ENCODE measurements at regions of chr10 and their contacts with region 1.

Region 1: GRCh38 chr10:95864906-95865813 is 42.6 kb upstream of the CC2D2B start:
- DNase-seq: peak in 1 of 2 donors; percentile 31
- H3K4me3 ChIP-seq: no peak overlapping the region
- H3K27ac ChIP-seq: peak overlapping the region; percentile 27 to 47
- H3K4me1 ChIP-seq: peaks cover 0 to 9% (median 4%) of the 10 kb centered on the region in 4 donors
- H3K27me3 ChIP-seq: no peaks in the 10 kb centered on the region
- CTCF ChIP-seq: peak; percentile 64 to 68

Region 2: DNA sequence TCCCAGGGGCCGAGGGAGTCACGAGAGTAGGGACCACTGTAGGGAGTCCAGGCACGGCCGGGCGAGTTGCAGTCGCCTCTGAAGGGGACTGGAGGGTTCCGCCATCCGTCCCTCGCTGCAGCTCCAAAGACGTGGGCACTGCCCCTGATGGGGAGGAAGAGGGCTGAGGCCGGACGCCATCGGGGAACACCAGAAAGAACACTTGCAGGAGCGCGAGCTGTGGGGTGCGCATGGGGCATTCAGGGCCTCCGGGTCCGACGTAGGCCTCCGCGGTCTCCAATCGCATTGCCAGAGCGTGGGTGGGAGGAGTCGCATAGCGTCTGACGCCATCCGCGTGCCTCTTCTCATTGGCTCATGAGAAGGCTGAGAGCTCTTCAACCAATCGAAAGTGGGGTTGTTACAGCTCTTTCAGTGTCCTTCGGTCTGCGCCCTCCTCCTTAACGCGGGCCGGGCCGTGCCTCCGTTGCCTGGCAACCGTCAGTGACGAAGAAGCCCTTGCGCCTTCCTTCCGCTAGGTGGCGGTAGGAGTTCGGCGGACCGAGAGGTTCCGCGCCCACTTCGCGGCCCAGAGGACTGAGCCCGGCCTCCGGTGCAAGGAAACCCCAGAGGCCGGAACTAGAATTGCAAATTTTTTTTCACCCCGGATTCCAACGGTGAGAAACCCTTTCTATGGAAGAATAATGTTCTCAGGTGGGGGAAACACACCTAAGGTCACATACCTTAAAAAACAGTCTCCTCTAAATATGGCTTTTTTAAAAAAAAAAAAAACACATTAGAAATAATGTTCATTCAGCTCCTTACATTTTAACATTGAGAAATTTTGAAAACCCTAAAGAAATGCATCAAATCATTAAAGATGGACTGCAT is 171.3 kb before region 1 on chr10 and contains the start of gene TCTN3:
- intact Hi-C with region 1: loop called (anchors 5 kb)
- DNase-seq: peak; percentile 96 to 98
- H3K4me3 ChIP-seq: peak within 1 kb of the TSS; percentile 72 to 91
- H3K27ac ChIP-seq: peak within 1 kb of the TSS; percentile 79 to 82
- H3K4me1 ChIP-seq: peaks cover 0 to 34% (median 23%) of the 10 kb centered on the region in 4 donors
- H3K27me3 ChIP-seq: no peaks in the 10 kb centered on the region
- CTCF ChIP-seq: peak; percentile 99 to 100